Activated B cell treated with CpG ODN at 0.5 μM for 24 hours (primary cell): ENCODE measurements at regions of chr4 and their contacts with region 1.

Region 1: DNA sequence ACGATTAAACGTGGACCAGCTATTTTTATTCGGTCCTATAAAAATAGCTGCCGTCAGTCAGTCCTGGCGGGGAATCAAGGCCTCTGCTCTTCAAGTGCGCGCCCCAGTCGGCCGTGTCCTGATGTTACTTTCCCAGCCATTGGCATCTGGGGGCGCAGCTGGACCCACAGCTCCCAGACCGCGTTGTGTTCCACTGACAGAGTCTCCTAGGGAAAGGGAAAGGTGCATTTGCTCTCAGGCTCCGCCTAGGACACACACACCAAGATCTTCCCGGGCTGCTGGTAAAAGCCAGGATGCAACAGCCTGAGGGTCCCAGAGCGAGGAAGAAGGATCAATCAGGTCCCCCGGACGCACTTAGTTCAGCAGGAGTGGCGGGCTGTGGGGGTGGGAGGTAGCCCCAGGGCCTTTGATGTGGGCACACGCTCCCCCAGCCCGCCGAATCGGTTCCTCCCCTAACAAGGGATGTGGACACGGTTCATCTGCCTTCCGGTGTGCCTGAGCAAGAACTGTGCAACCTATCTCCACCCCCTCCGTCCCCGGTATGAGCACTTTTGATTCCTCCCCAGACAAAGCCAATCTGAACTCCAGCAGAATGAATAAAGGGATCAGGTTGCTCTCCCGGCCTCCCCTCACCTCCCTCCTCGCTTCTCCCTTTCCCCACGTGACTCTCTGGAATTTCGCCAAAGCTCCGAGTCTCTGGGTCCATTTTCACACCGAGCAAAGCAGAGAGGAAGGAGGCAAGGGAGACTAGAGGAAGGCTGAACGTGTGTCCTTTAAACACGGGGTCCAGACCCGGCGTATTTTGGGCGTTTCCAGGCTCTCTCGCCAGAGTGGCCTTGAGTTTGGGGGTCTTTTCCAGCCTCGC is 626 bp upstream of the FRAS1 start:
- DNase-seq: peak; percentile 29
- ATAC-seq: peak; percentile 74
- H3K4me3 Mint-ChIP-seq: peak overlapping the region; percentile 93
- H3K27ac Mint-ChIP-seq: no peak overlapping the region
- H3K4me1 Mint-ChIP-seq: peaks cover 32% of the 10 kb centered on the region
- H3K27me3 Mint-ChIP-seq: peaks cover 46% of the 10 kb centered on the region
- CTCF ChIP-seq: no peak

Region 2: DNA sequence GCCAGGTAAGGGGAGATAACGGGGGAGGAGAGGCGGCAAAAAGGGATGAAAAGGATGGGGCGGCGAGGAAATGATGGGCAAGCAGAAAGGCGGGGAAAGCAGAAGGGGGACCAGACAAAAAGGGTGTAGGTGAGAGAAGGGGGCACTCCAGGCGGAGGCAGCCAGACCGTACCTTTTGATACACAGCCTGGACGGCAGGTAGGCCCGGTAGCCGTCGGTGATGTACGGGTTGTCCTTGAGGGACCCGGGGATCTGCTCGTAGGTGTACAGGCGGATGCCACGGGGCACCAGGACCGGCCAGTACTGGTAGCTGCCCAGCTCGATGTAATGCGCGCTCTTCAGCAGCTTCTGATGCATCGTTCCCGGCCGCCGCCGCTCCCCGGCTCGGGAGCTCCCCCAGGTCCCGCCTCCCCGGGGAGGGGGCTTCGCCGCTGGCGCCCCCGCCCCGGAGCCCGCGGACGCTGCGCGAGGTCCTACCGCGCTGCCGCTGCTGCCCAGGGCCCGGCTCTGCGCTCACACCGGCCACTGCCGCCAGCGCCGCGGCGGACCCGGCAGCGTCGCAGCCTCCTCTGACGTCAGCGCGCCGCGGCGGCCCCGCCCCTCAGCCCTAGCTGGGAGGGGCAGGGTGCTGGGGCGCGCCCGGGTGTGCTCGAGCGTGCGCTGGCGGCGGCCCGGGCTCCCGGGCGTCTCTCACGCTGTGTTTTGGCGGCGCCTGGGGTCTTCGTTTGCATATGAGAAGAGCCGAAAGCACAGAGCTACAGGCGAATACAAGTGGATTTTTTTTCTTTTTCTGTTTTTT is 882.6 kb after region 1 on chr4 and contains the start of gene PAQR3:
- CTCF ChIA-PET with region 1: no interaction called
- POLR2A ChIA-PET with region 1: no interaction called
- intact Hi-C with region 1: loop called (anchors 5 kb)
- DNase-seq: peak; percentile 90
- ATAC-seq: peak; percentile 98
- H3K4me3 Mint-ChIP-seq: peak within 1 kb of the TSS; percentile 96
- H3K27ac Mint-ChIP-seq: peak within 1 kb of the TSS; percentile 84
- H3K4me1 Mint-ChIP-seq: peaks cover 20% of the 10 kb centered on the region
- H3K27me3 Mint-ChIP-seq: no peaks in the 10 kb centered on the region
- CTCF ChIP-seq: no peak
- total RNA-seq, gene PAQR3: 10.2 and 10.3 TPM in 2 replicates